CD4-positive, alpha-beta T cell (primary cell): ENCODE measurements at regions of chr16 and their contacts with region 1.

Region 1: GRCh38 chr16:3909791-3910570 is 29.5 kb upstream of the CREBBP start:
- DNase-seq: no peak
- ATAC-seq: no peak
- H3K4me3 ChIP-seq: no peak overlapping the region
- H3K4me3 Mint-ChIP-seq: no peak overlapping the region
- H3K27ac ChIP-seq: no peak overlapping the region
- H3K27ac Mint-ChIP-seq: no peak overlapping the region
- H3K4me1 ChIP-seq: no peaks in the 10 kb centered on the region
- H3K4me1 Mint-ChIP-seq: no peaks in the 10 kb centered on the region
- H3K27me3 ChIP-seq: no peaks in the 10 kb centered on the region
- H3K27me3 Mint-ChIP-seq: no peaks in the 10 kb centered on the region
- CTCF ChIP-seq: no peak

Region 2: GRCh38 chr16:3890091-3890490 is 19.9 kb before region 1 on chr16:
- CTCF ChIA-PET with region 1: no interaction called
- POLR2A ChIA-PET with region 1: no interaction called
- intact Hi-C with region 1: no loop called
- DNase-seq: no peak
- ATAC-seq: no peak
- H3K4me3 ChIP-seq: no peak overlapping the region
- H3K4me3 Mint-ChIP-seq: no peak overlapping the region
- H3K27ac ChIP-seq: no peak overlapping the region
- H3K27ac Mint-ChIP-seq: no peak overlapping the region
- H3K4me1 ChIP-seq: no peaks in the 10 kb centered on the region
- H3K4me1 Mint-ChIP-seq: no peaks in the 10 kb centered on the region
- H3K27me3 ChIP-seq: peaks cover 0 to 4% of the 10 kb centered on the region in 2 experiments
- H3K27me3 Mint-ChIP-seq: peaks cover 11% of the 10 kb centered on the region
- CTCF ChIP-seq: no peak

Region 3: DNA sequence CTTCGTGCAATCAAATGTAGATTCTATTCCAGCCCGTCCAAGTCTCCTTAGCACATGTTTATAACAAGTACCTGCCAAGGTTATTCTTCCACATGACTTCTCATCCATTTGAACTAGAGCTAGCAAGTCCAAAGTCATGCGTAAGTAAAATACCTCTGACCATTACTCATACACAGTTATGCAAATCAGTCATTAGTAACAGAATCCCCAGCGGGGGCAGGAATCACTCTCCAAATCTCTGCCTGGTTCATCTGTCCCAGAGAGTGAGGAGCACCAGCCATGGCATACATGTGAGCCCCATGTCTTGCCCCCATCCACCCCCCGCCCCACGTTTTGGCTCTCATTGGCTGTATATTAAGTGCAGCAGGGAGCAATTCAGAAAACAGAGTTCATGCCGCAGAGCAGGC is 304.2 kb after region 1 on chr16:
- CTCF ChIA-PET with region 1: no interaction called
- POLR2A ChIA-PET with region 1: no interaction called
- intact Hi-C with region 1: loop called in 1 of 2 experiments (anchors 10 kb)
- DNase-seq: no peak
- ATAC-seq: no peak
- H3K4me3 ChIP-seq: no peak overlapping the region
- H3K4me3 Mint-ChIP-seq: no peak overlapping the region
- H3K27ac ChIP-seq: no peak overlapping the region
- H3K27ac Mint-ChIP-seq: no peak overlapping the region
- H3K4me1 ChIP-seq: no peaks in the 10 kb centered on the region
- H3K4me1 Mint-ChIP-seq: no peaks in the 10 kb centered on the region
- H3K27me3 ChIP-seq: no peaks in the 10 kb centered on the region
- H3K27me3 Mint-ChIP-seq: peaks cover 8% of the 10 kb centered on the region
- CTCF ChIP-seq: no peak